Calu3 (cell line): ENCODE measurements at regions of chr4 and their contacts with region 1.

Region 1: GRCh38 chr4:87838890-87839591 is 6.3 kb downstream of the MEPE start:
- DNase-seq: no peak
- H3K4me3 Mint-ChIP-seq: no peak overlapping the region
- H3K27ac Mint-ChIP-seq: no peak overlapping the region
- H3K4me1 Mint-ChIP-seq: no peaks in the 10 kb centered on the region
- H3K27me3 Mint-ChIP-seq: no peaks in the 10 kb centered on the region
- CTCF ChIP-seq: peak; percentile 33

Region 2: DNA sequence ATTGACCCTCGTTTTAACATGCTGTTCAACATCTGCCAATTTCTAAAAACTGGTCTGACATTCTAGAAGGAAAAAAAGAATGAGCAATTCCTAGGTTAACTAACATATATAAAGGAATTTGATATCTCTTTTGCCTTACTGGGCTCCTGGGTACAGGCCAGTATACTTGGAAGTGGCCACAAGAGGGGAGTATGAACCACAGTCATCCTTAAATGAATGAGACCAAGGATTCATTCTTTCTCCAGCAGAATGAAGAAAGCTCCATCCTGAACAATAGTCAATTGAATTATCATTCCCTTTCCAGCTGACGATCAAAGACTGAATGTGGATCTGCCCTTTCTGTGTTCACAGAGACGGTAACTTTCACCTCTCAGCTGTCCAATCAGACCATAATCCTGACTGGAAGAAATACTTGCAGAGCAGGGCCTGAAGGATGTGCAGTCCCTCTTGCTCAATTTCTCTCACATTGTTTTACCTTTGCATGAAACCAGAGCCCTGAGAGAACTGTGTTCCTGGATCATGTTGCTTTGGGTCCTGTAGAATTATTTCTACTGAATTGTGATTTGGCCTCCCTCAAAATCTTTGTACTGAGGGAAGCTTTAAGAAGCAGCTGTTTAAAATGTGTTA is 295.1 kb before region 1 on chr4:
- CTCF ChIA-PET with region 1: interaction called, 12 read pairs
- intact Hi-C with region 1: loop called (anchors 2 kb)
- DNase-seq: peak; percentile 32
- H3K4me3 Mint-ChIP-seq: no peak overlapping the region
- H3K27ac Mint-ChIP-seq: no peak overlapping the region
- H3K4me1 Mint-ChIP-seq: no peaks in the 10 kb centered on the region
- H3K27me3 Mint-ChIP-seq: peaks cover 21% of the 10 kb centered on the region
- CTCF ChIP-seq: no peak

Region 3: DNA sequence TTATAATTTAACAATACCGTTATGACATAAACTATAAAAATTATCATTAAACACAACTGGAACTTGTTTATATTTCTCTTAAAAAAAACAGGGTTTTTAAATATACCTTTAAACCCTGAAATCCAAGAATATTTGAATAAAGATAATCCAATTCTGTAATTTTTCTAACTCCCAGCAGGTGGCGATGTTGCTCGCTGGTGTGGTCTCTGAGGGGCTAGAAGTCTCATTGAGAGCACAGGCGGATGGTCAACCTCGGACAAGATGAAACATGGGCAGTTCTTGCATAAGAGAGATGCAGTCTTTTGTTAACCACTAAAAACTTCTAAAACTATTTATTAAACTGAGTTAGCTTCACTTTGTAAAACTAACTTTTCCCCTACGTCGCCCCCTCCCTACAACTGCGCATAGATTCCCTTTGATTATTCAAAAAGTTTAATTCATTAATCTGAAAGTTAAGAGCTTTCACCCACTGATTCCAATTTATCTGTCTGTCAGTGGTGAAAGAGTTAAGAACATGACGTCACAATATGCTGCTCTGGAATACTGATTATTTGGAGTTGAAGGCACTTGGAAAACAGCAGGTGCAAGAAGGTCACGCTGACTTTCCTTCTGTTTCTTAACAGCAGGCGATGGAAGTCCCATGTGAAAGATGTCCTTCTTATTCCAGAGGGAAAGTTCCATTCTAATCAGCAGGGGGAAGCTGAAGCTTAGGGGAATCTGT is 159.4 kb before region 1 on chr4:
- CTCF ChIA-PET with region 1: no interaction called
- intact Hi-C with region 1: loop called (anchors 1 kb)
- DNase-seq: peak; percentile 31
- H3K4me3 Mint-ChIP-seq: no peak overlapping the region
- H3K27ac Mint-ChIP-seq: no peak overlapping the region
- H3K4me1 Mint-ChIP-seq: no peaks in the 10 kb centered on the region
- H3K27me3 Mint-ChIP-seq: no peaks in the 10 kb centered on the region
- CTCF ChIP-seq: peak; percentile 76

Region 4: GRCh38 chr4:88533937-88534750 is 695.1 kb after region 1 on chr4:
- CTCF ChIA-PET with region 1: no interaction called
- intact Hi-C with region 1: no loop called
- DNase-seq: no peak
- H3K4me3 Mint-ChIP-seq: no peak overlapping the region
- H3K27ac Mint-ChIP-seq: peak overlapping the region; percentile 17
- H3K4me1 Mint-ChIP-seq: peaks cover 8% of the 10 kb centered on the region
- H3K27me3 Mint-ChIP-seq: no peaks in the 10 kb centered on the region
- CTCF ChIP-seq: no peak